Activated T-helper 2 cell treated with anti-CD3 and anti-CD28 coated beads, Interferon-gamma antibody, Interleukin-2, Interleukin-4, amounts not matched to agents 10 μg/mL and 5 μg/mL and 100 μg/mL, durations not matched to agents 14 hours and 24 hours and 36 hours (primary cell): ENCODE measurements at regions of chr12 and their contacts with region 1.

Region 1: GRCh38 chr12:116135209-116135930 is 142.1 kb downstream of the MED13L start:
- DNase-seq: no peak
- H3K4me3 Mint-ChIP-seq: no peak overlapping the region
- H3K27ac Mint-ChIP-seq: peak overlapping the region; percentile 86
- H3K4me1 Mint-ChIP-seq: peaks cover 57% of the 10 kb centered on the region
- H3K27me3 Mint-ChIP-seq: no peaks in the 10 kb centered on the region

Region 2: DNA sequence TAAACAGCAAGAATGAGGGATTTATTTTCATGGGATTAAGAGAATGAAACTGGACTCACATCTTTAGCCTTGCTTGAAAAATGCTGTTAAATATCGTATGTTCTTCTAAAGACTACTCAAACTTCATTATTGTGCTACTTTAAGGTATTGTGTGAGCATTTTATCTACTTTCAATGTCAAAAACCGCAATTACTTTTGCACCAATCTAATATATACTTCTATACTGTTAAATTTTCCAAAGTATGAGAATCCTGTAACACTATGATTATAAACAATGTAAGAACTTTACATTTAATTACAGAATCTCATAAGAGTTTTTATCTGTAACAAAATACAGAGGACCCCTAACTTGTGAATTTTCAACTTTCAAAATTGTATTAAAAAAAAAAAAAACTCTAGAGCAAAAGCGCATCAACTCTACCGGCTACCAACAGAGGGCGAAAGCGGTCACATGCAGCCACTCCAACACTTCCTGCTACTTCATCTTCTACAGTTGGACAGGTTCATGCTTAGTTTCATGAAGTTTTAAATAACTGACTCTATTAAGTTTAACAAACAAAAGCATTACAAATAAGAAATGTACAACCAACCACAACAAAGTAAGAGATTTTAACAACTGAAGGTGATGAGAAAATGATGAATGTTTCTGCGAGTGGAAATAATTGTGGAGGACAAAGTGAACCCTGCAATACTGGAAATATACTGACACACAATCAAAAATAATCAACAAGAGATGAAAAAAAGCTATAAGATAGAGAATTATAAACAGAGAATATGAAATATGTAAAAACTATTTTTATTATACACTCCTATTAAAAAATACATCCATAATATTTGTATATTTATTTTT is 68.8 kb before region 1 on chr12:
- intact Hi-C with region 1: loop called (anchors 5 kb)
- DNase-seq: peak; percentile 40
- H3K4me3 Mint-ChIP-seq: no peak overlapping the region
- H3K27ac Mint-ChIP-seq: no peak overlapping the region
- H3K4me1 Mint-ChIP-seq: peaks cover 17% of the 10 kb centered on the region
- H3K27me3 Mint-ChIP-seq: no peaks in the 10 kb centered on the region

Region 3: DNA sequence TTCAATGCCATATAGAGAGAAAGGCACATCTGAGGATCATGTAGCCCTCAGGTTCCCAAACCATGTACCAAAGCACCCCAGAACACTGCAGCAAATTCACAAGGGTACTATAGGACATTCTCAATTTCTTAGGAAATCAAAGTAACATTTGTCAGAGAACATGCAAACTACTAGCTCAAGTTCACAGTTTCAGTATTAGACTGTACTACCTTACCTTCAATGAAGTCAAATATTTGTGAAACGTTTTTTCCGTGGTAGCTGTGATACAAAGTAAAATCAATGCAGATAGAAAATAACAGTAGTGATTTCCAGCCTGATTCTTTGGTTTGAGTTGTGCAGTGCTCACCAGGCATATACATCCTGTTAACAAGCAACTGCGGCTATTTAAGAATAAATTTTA is 55.0 kb before region 1 on chr12:
- intact Hi-C with region 1: loop called (anchors 2 kb)
- DNase-seq: no peak
- H3K4me3 Mint-ChIP-seq: no peak overlapping the region
- H3K27ac Mint-ChIP-seq: no peak overlapping the region
- H3K4me1 Mint-ChIP-seq: peaks cover 16% of the 10 kb centered on the region
- H3K27me3 Mint-ChIP-seq: no peaks in the 10 kb centered on the region

Region 4: DNA sequence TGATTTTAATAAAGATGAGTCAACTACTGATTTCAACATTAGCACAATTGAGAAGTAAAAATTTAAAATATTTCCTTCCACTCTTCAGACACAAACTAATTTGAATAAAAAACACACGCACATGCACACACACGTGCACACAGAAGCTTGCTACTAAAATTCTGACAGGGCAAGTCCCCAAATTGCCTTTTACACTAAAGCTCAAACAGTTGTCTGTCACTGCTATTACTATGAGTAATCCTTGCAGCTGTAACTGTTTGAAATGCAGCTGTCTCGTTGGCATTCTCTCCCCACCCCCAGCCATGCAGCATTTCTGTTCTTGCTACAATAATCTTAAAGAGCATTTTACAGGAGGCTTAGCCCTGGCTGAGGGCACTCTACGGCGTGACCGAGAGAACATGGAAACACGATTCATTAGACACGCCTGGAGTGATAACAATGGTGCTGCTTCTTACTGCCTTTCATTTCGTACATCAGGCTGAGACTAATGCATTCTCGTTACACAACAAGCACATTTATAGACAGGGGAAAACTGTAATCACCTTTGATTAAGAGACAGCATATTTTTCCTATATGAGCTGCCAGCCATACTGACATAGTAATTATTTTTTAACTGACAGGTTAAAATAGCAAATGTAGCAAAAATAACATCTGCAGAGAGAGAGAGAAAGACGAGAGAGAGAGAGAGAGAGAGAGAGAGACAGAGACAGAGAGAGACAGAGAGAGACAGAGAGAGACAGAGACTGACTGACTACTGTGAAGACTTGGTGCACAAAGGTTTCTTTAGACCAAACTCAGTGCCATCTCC is 11.7 kb before region 1 on chr12:
- intact Hi-C with region 1: loop called (anchors 2 kb)
- DNase-seq: no peak
- H3K4me3 Mint-ChIP-seq: peak overlapping the region; percentile 26
- H3K27ac Mint-ChIP-seq: peak overlapping the region; percentile 20
- H3K4me1 Mint-ChIP-seq: peaks cover 42% of the 10 kb centered on the region
- H3K27me3 Mint-ChIP-seq: no peaks in the 10 kb centered on the region

Region 5: DNA sequence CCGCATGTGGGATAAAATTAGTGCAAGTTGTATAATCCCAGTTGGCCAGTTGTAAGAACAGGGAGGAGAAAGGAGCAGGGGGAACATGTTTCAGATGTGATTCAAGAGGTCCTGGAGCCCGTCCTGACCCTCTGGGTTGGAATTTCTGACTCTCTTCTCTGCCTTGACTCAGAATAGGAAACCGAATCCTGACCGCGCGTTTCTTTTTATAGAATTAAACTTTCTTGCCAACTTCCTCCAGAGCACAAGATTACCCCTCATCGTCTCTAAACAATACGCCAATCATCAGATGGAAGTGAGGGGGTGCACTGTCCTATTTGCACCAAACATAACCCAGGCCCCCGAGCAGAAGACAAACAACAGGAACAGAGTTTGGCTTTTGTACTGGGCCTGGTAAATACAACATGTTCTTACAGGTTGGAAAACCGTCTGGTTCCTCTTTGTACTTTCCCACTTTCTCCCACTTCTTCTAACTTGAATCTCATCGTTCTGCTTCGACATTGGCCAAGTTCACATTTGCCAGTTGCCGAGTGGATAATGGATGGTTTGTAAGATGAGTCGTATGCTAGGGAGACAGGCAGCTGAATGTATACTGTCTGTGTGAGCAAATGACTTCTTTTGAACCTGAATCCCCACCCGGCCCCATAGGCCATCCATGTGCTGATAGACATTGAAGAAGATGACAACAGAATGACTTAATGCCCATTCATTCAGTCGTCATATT is 184.7 kb after region 1 on chr12:
- intact Hi-C with region 1: no loop called
- DNase-seq: peak; percentile 13
- H3K4me3 Mint-ChIP-seq: peak overlapping the region; percentile 37
- H3K27ac Mint-ChIP-seq: peak overlapping the region; percentile 84
- H3K4me1 Mint-ChIP-seq: peaks cover 46% of the 10 kb centered on the region
- H3K27me3 Mint-ChIP-seq: peaks cover 1% of the 10 kb centered on the region

Region 6: DNA sequence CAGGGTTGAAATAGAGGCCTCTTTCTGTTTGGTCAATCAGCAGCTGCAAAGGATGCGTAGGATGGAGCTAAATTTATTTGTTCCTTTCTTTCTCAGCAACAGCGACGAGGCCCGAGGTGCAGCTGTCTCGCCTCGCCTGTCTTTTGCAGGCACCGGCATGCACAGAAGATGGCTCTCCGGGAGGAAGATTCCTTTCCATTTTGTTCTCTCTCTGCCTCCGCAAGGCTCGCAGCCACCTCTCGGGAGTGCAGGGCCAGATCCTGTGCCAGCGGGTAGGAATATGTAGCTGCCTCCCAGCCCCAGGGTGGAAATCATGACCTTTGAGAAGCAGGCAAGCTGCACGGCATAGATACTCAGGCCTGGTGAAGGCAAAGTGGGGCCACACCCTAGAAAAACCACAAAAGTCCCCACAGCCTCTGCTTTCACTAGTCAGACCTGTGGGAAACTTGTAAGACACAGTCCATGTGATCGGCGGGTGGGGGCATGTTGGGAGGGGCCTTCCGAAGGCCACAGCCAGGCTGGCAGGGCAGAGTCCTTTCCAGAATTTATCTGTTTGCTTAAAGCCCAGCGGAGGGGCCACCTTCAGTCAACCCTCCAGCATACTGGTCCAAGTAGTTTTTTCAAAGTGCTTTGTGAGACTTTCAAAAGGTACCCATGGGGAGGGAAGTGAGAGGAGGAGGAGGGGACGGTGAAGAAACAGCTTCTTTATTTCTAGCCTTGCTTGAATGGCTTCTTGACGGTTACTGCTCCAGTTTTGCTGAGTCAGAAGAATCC is 424.0 kb after region 1 on chr12 and contains the start of gene MAP1LC3B2:
- intact Hi-C with region 1: loop called (anchors 10 kb)
- DNase-seq: peak; percentile 86
- H3K4me3 Mint-ChIP-seq: peak within 1 kb of the TSS; percentile 51
- H3K27ac Mint-ChIP-seq: peak within 1 kb of the TSS; percentile 95
- H3K4me1 Mint-ChIP-seq: peaks cover 42% of the 10 kb centered on the region
- H3K27me3 Mint-ChIP-seq: no peaks in the 10 kb centered on the region
- total RNA-seq, gene MAP1LC3B2: 0.37 and 0.60 TPM in 2 replicates